ENCODE measurements at regions of chr11 and their contacts with region 1.

Region 1: DNA sequence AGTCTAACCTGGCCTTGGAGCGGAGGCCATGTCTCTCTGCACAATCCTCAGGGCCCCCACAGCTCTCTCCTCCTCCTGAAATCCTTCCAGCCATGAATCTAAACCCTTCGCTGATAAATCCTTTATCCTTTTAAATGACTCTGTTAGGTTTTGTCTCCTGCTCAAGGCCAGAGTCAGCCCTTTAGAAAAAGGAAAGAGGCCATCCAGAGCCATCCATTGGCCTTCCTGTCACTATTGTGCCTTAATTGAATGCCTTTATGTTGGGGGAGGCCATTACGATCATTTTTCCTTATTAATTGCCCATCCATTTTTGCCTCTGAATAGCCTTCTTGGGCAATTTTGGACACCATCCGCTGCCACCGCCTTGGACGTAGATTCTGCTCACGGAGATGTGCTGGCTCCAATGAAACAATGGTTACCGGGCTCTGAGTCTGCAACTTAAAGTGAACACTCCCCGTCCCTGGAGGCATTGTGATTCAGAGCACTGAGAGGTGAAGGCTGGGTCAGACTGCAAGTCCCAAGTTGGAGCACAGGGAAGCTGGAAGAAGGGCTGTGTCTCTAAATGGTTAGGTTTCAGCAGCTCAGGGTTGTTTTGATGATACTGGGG is 213.0 kb upstream of the E2F8 start:
- DNase-seq: no peak
- H3K4me3 ChIP-seq: no peak overlapping the region
- H3K27ac ChIP-seq: no peak overlapping the region
- H3K4me1 ChIP-seq: no peaks in the 10 kb centered on the region
- H3K27me3 ChIP-seq: no peaks in the 10 kb centered on the region
- CTCF ChIP-seq: no peak
- POLR2A ChIP-seq: no peak

Region 2: GRCh38 chr11:18634140-18635032 is 819.4 kb before region 1 on chr11 and contains the start of gene SPTY2D1:
- intact Hi-C with region 1: loop called (anchors 5 kb)
- DNase-seq: peak; percentile 99
- H3K4me3 ChIP-seq: peak within 1 kb of the TSS; percentile 76 to 93 (median 87)
- H3K27ac ChIP-seq: peak within 1 kb of the TSS; percentile 98
- H3K4me1 ChIP-seq: peaks cover 0 to 11% of the 10 kb centered on the region in 2 donors
- H3K27me3 ChIP-seq: no peaks in the 10 kb centered on the region
- CTCF ChIP-seq: no peak
- POLR2A ChIP-seq: peak; percentile 86
- total RNA-seq, gene SPTY2D1: 19.5 to 30.6 (median 27.5) TPM

Region 3: GRCh38 chr11:19187114-19187832 is 266.5 kb before region 1 on chr11:
- intact Hi-C with region 1: no loop called
- DNase-seq: no peak
- H3K4me3 ChIP-seq: no peak overlapping the region
- H3K27ac ChIP-seq: no peak overlapping the region
- H3K4me1 ChIP-seq: no peaks in the 10 kb centered on the region
- H3K27me3 ChIP-seq: no peaks in the 10 kb centered on the region
- CTCF ChIP-seq: no peak
- POLR2A ChIP-seq: no peak

Region 4: GRCh38 chr11:19482319-19483100 is 28.8 kb after region 1 on chr11:
- intact Hi-C with region 1: no loop called
- DNase-seq: no peak
- H3K4me3 ChIP-seq: no peak overlapping the region
- H3K27ac ChIP-seq: no peak overlapping the region
- H3K4me1 ChIP-seq: no peaks in the 10 kb centered on the region
- H3K27me3 ChIP-seq: peaks cover 0 to 9% of the 10 kb centered on the region in 2 donors
- CTCF ChIP-seq: no peak
- POLR2A ChIP-seq: no peak

Measured in breast epithelium (tissue), 4 donors.